ENCODE measurements at regions of chr1 and their contacts with region 1.

Region 1: DNA sequence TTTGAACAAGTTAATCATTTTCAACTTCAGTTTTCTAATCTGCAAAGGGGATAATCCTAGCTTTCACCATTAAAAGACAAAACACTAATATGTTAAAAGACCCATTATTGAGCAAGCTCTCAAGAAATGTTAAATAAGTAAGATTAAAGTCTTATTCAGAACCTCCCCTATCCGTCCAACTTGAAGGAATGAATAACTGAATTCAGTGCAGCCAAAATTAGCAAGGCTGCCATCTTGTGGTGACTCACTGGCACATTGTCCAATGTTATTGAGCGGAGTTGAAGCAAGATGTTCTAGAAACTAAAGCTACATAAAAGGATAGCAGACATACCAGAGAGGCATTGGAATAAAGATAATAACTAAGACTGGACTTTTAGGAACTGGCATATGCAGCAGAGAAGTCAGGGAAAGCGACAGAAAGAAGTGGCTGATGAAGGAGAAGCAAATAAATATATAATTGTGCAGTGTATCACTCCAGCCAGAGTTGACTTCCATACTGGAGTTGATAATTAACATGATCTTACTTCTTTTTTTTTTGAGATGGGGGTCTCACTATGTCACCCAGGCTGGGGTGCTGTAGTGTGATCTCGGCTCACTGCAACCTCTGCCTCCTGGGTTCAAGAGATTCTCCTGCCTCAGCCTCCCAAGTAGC is 8.2 kb upstream of the CAP1 start:
- DNase-seq: peak in 1 of 2 experiments; percentile 55
- H3K4me3 ChIP-seq: no peak overlapping the region
- H3K27ac ChIP-seq: no peak overlapping the region
- H3K4me1 ChIP-seq: peaks cover 17% of the 10 kb centered on the region
- H3K27me3 ChIP-seq: no peaks in the 10 kb centered on the region
- CTCF ChIP-seq: peak; percentile 73

Region 2: GRCh38 chr1:39845275-39846116 is 186.9 kb before region 1 on chr1:
- CTCF ChIA-PET with region 1: no interaction called
- POLR2A ChIA-PET with region 1: interaction called, 11 read pairs
- intact Hi-C with region 1: no loop called
- DNase-seq: peak; percentile 27 to 45
- H3K4me3 ChIP-seq: no peak overlapping the region
- H3K27ac ChIP-seq: no peak overlapping the region
- H3K4me1 ChIP-seq: 0 out of 2 replicates have a peak, but pooled peaks cover under 1% of the 10 kb centered on the region
- H3K27me3 ChIP-seq: no peaks in the 10 kb centered on the region
- CTCF ChIP-seq: no peak

Region 3: DNA sequence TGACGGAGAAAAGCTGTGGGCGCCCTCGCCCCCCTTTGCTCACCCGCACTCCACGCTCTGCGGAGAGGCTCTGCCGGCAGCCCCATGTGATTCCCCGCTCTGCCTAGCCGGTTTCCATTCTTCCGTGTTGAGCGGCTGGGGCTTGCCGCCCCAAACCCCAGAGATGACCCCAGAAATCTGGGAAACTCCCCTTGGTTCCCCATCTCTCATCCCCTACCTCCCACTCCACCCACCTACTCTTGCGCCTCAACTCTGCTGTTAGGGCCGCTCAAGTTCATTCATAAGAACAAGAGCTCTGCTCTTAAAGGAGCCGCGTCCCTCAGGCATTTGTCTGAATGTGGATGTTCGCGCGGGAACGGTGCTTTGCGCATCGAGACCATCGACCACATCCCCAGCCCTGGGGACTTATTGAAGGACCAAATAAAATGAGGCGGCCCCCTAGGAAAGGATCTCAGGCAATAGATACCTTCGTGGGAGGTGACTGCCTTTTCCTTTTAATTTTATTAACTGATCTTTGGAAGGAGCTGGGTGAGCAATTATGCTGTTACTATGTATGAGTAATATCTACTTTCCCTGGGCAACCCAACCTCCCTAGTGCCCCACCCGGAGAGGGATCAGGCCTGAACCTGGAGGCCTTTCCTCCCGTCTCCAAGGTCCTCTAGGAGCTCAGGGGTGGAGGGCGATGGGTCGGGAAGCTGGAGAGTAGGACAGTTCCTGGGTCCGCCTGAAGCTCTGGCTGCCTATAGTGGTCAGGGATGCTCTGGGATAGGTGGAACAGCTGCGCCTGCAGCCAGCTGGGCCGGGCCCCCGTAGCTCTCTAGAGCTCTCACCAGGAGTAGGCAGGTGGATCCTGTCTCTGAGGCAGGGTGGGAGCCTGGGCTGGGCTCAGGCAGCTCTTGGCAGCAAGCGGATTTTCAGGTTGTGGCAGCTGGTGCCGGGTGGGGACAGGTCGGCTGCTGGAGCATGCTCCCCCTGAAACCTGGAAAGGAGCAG is 76.5 kb before region 1 on chr1:
- CTCF ChIA-PET with region 1: interaction called, 5 read pairs
- POLR2A ChIA-PET with region 1: interaction called, 10 read pairs
- intact Hi-C with region 1: no loop called
- DNase-seq: peak; percentile 47 to 62
- H3K4me3 ChIP-seq: peak overlapping the region; percentile 69
- H3K27ac ChIP-seq: no peak overlapping the region
- H3K4me1 ChIP-seq: peaks cover 9% of the 10 kb centered on the region
- H3K27me3 ChIP-seq: no peaks in the 10 kb centered on the region
- CTCF ChIP-seq: no peak

Region 4: DNA sequence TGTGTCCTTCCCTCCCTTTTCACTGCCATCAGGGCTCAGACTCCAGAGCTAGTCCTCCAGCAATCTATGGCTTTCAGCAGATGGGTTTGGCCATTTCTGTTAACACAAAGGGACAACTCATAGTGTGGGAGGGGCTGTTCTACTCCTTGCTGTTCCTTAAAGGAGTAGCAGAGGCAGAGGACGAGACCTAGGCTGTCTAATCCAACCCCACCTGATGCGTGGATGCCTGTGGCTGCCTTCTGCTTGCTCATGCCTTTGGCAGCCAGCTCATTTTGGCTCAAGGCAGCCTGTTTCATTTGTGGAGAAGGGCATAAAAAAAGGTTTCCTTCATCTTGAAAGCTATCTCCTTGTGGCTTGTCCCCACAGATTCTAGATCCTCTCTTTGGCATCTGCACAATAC is 50.4 kb before region 1 on chr1:
- CTCF ChIA-PET with region 1: interaction called, 7 read pairs
- POLR2A ChIA-PET with region 1: interaction called, 3 read pairs
- intact Hi-C with region 1: loop called (anchors 1 kb)
- DNase-seq: peak; percentile 90 to 93
- H3K4me3 ChIP-seq: no peak overlapping the region
- H3K27ac ChIP-seq: peak overlapping the region; percentile 65
- H3K4me1 ChIP-seq: peaks cover 36% of the 10 kb centered on the region
- H3K27me3 ChIP-seq: no peaks in the 10 kb centered on the region
- CTCF ChIP-seq: no peak

Region 5: DNA sequence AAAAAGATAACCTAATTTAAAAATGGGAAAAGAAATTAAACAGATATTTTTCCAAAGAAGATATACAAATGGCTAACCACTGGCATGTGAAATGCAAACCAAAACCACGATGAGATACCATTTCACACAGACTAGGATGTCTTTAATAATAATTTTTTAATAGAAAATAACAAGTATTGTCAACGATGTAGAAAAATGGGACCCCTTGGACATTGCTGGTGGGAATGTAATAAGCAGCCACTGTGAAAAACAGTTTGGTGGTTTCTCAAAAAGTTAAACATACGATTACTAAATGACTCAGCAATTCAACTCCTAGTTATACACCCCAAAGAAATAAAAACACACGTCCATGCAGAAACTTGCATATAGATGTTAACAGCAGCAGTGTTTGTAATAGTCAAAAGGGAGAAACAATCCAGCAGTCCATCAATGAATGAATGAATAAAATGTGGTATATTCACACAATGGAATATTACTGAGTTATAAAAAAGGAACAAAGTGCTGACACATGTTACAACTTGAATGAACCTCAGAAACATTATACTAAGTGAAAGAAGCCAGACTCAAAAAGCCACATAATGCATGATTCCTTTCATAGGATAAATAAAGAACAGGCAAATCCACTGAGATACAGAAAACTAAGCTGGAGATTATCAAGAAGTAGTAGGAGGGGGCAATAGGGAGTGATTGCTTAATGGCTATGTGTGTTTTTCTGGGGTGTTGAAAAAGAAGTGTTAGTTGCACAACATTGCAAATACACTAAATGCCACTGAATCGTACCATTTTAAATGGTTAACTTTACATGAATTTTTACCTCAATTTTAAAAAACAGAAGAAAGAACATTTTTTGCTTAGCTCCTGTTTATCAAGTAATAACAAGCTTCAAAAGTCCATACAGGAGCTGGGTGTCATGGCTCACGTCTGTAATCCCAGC is 60.6 kb after region 1 on chr1:
- CTCF ChIA-PET with region 1: no interaction called
- POLR2A ChIA-PET with region 1: no interaction called
- intact Hi-C with region 1: no loop called
- DNase-seq: no peak
- H3K4me3 ChIP-seq: no peak overlapping the region
- H3K27ac ChIP-seq: no peak overlapping the region; the same call in 1 of the 2 replicates
- H3K4me1 ChIP-seq: peaks cover 52% of the 10 kb centered on the region
- H3K27me3 ChIP-seq: no peaks in the 10 kb centered on the region
- CTCF ChIP-seq: no peak

Region 6: GRCh38 chr1:40315239-40315794 is 283.0 kb after region 1 on chr1:
- CTCF ChIA-PET with region 1: no interaction called
- POLR2A ChIA-PET with region 1: no interaction called
- intact Hi-C with region 1: no loop called
- DNase-seq: peak in 1 of 2 experiments; percentile 78
- H3K4me3 ChIP-seq: no peak overlapping the region
- H3K27ac ChIP-seq: no peak overlapping the region
- H3K4me1 ChIP-seq: peaks cover 14% of the 10 kb centered on the region
- H3K27me3 ChIP-seq: peaks cover 16% of the 10 kb centered on the region
- CTCF ChIP-seq: peak; percentile 85

Measured in PC-9 (cell line).